Activated CD4-positive, alpha-beta T cell treated with anti-CD3 and anti-CD28 coated beads for 36 hours (primary cell): ENCODE measurements at regions of chr1 and their contacts with region 1.

Region 1: DNA sequence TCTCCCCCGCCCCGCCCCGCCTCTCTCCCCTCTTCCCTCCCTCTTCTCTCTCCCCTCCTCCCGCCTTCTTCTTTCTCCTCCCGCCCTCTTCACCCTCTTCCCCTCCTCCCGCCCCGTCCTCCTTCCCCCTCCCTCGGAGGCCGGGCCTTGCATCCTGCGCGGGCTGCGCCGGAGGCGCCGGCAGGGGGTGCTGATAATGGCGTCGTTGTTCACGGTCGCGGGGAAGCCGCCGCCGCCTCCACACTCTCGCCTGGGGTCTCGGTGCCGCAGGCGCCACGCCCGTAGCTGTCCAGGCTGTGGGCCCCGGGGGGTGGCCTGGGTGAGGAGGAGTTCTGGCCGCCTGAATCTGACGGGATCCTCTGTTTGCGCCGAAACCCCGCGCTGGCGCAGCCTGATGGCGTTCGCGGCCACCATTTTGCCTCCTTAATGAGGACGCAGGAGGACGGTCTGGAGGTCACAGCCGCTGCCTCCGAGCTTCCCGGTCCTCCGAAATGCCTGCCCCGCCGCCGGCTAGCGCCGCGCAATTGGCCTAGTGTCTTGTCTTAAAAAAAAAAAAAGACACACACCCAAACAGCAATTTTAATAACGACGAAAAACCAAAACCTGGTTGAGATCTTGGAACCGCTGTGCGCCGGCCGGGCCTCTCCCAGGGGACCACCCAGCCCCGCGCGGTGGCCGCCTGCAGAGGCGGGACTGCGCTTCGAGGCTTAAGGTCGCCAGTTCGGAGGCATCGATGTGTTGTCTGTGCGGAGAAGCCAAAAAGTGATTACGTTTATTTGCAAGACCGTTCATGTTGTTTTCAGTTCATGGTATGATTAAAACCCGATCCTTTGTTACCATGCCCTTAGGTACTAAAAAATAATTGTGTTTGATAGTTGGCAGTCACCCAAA is 106.6 kb upstream of the HNRNPU start:
- DNase-seq: peak; percentile 96
- ATAC-seq: peak; percentile 84
- H3K4me3 Mint-ChIP-seq: peak overlapping the region; percentile 92
- H3K27ac Mint-ChIP-seq: peak overlapping the region; percentile 97
- H3K4me1 Mint-ChIP-seq: peaks cover 15% of the 10 kb centered on the region
- H3K27me3 Mint-ChIP-seq: no peaks in the 10 kb centered on the region

Region 2: GRCh38 chr1:243850452-243851256 is 1120.3 kb before region 1 on chr1:
- CTCF ChIA-PET with region 1: no interaction called
- POLR2A ChIA-PET with region 1: no interaction called
- intact Hi-C with region 1: loop called in 1 of 2 experiments (anchors 2 kb)
- DNase-seq: peak; percentile 92
- ATAC-seq: peak; percentile 50
- H3K4me3 Mint-ChIP-seq: peak overlapping the region; percentile 70
- H3K27ac Mint-ChIP-seq: peak overlapping the region; percentile 92
- H3K4me1 Mint-ChIP-seq: peaks cover 33% of the 10 kb centered on the region
- H3K27me3 Mint-ChIP-seq: peaks cover 2% of the 10 kb centered on the region

Region 3: GRCh38 chr1:244461245-244462071 is 509.4 kb before region 1 on chr1 and contains the start of gene CATSPERE:
- CTCF ChIA-PET with region 1: no interaction called
- POLR2A ChIA-PET with region 1: no interaction called
- intact Hi-C with region 1: loop called in 1 of 2 experiments (anchors 2 kb)
- DNase-seq: peak; percentile 83
- ATAC-seq: peak; percentile 98
- H3K4me3 Mint-ChIP-seq: peak within 1 kb of the TSS; percentile 69
- H3K27ac Mint-ChIP-seq: peak within 1 kb of the TSS; percentile 99
- H3K4me1 Mint-ChIP-seq: peaks cover 14% of the 10 kb centered on the region
- H3K27me3 Mint-ChIP-seq: no peaks in the 10 kb centered on the region
- total RNA-seq, gene CATSPERE: 0.11 TPM in 1 of 2 experiments, not detected in the other

Region 4: GRCh38 chr1:244552340-244552739 is 418.6 kb before region 1 on chr1:
- CTCF ChIA-PET with region 1: no interaction called
- POLR2A ChIA-PET with region 1: no interaction called
- intact Hi-C with region 1: no loop called
- DNase-seq: no peak
- ATAC-seq: no peak
- H3K4me3 Mint-ChIP-seq: no peak overlapping the region
- H3K27ac Mint-ChIP-seq: no peak overlapping the region
- H3K4me1 Mint-ChIP-seq: no peaks in the 10 kb centered on the region
- H3K27me3 Mint-ChIP-seq: no peaks in the 10 kb centered on the region

Region 5: DNA sequence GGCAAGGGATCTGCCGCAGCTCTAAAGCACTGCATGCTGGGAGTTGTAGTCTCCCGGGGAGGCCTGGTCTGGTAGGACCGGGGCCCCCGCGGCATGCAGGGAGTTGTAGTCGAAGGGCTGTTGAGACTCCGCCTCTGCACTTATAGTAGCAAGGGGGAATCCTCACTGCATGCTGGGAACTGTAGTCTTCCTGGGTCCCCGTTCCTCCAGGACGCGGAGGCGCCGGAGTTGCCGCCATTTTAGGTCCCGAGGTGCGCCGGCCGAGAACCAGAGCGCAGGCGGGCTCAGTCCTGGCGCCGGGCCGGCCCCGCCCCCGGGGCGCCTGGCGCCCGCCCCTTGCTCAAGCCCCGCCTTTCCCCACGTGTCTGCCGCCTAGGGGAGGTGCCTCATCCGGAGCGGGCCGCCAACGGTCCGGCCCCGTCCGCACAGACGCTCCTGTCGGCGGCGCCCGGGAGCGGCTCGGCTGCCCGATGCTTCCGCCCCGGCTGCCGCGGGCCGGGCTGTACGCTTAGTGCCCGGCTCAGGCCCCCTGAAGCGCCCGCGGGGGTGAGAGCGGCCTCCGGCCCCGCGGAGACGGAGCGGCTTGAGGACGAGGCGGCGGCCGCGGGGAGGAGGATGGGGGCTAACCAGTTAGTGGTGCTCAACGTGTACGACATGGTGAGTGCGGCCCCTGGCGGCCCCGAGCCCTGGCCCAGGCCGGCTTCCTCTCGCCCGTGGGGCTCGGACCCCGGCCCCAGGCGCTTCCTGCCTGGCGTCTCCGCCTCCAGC is 318.0 kb before region 1 on chr1 and contains the start of gene DESI2:
- CTCF ChIA-PET with region 1: no interaction called
- POLR2A ChIA-PET with region 1: interaction called, 3 read pairs
- intact Hi-C with region 1: loop called (anchors 1 to 2 kb)
- DNase-seq: peak; percentile 98
- ATAC-seq: peak; percentile 96
- H3K4me3 Mint-ChIP-seq: peak within 1 kb of the TSS; percentile 76
- H3K27ac Mint-ChIP-seq: peak within 1 kb of the TSS; percentile 95
- H3K4me1 Mint-ChIP-seq: peaks cover 19% of the 10 kb centered on the region
- H3K27me3 Mint-ChIP-seq: no peaks in the 10 kb centered on the region
- total RNA-seq, gene DESI2: 24.5 to 26.0 TPM

Region 6: DNA sequence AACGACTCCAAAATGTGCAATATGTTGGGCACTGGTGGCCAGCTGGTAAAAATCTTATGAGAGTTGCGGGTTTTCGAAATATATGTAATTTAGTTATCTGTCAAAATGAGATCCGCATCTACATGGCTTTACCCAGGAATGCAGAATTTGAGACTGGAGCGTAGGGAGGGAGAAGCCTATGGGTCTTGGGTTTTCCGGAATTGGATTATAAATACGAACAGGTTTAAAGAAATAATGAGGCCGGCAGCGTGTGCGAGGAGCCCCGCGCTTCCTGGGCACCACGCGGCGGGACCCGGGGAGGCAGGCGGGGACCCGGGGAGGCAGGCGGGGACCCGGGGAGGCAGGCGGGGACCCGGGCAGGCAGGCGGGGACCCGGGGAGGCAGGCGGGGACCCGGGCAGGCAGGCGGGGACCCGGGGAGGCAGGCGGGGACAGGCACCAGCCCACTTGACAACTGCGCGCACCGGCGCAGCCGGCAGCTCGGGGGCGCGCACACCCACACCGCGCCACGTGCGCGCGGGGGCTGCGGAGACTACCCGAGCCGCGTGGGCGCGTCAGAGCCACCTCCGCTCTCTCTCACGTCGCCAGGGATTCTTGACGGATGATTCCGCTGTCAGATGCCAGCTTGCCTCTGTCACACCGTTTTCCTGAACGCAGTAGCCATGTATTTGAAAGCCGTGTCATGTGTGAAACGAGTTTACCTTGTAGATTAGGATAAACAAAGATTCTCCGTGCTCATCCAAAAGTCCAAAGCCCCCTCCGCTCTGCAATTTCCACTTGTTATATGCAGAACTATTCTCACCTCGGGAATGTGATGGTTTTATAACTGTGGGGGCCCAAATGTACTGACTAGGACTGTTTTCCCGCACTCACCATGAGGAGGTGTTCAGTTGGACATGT is 52.2 kb before region 1 on chr1:
- CTCF ChIA-PET with region 1: interaction called, 3 read pairs
- POLR2A ChIA-PET with region 1: interaction called, 3 read pairs
- intact Hi-C with region 1: loop called (anchors 1 to 2 kb)
- DNase-seq: peak; percentile 66
- ATAC-seq: peak; percentile 86
- H3K4me3 Mint-ChIP-seq: peak overlapping the region; percentile 73
- H3K27ac Mint-ChIP-seq: peak overlapping the region; percentile 80
- H3K4me1 Mint-ChIP-seq: peaks cover 16% of the 10 kb centered on the region
- H3K27me3 Mint-ChIP-seq: peaks cover 3% of the 10 kb centered on the region

Region 7: DNA sequence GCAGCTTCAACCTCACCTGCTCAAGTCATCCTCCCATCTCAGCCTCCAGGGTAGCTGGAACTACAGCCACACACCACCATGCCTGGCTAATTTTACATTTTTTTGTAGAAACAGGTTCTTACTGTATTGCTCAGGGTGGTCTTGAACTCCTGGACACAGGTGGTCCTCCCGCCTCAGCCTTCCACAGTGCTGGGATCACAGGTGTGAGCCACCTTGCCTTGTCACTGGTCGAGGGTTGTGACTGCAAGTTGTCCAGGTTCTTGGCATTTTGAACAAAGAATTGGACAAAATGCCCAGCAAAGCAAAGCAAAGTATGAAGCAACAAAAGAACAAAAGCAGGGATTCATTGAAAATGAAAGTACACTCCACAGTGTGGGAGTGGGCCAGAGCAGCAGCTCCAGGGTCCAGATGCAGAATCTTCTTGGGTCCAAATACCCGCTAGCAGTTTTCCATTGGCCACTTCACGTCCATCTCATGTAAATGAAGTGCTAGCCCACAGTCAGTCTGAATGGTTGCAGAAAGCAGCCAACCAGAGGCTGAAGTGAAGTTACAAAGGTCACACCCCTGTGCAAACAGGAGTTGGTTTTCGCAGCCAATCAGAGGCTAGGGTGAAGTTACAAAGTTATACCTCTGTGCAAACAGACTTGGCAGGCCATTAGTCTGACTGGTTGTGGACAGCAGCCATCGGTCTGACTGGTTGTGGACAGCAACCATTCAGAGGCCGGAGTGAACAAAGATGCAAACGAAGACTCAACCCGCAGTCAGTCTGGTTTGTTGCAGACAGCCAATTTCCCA is 74.4 kb after region 1 on chr1:
- CTCF ChIA-PET with region 1: interaction called, 13 read pairs
- POLR2A ChIA-PET with region 1: interaction called, 5 read pairs
- intact Hi-C with region 1: loop called (anchors 2 kb)
- DNase-seq: no peak
- ATAC-seq: no peak
- H3K4me3 Mint-ChIP-seq: no peak overlapping the region
- H3K27ac Mint-ChIP-seq: no peak overlapping the region
- H3K4me1 Mint-ChIP-seq: no peaks in the 10 kb centered on the region
- H3K27me3 Mint-ChIP-seq: no peaks in the 10 kb centered on the region

Region 8: DNA sequence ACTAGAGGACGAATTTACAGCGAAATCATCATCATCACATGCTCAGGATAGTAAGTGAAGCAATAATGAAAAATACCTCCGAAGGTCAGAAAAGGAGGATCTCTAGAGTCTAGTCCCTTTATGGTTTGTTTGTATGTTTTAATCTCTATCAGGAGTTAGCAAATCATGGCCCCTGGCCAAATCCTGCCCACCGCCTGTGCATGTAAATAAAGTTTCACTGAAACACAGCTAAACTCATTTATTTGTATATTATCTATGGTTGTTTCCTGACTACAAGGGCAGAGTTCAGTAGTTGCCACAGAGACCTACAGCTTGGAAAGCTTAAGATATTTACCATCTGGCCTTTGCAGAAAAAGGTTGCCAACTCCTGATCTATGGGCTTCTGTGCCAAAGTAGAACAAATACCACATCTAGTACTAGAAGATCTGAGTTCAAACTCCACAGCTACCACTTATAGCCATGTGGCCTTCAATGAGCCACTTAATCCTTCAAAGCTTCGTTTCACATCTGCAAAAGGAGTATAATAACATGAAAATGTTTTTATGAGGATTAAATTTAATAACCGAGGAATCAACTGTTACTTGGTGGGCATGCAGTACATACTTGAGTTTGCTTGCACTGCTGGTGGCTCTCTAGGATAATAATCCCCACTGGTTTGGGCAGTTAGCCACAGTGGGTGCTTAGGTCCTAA is 89.9 kb after region 1 on chr1:
- CTCF ChIA-PET with region 1: no interaction called
- POLR2A ChIA-PET with region 1: no interaction called
- intact Hi-C with region 1: no loop called
- DNase-seq: no peak
- ATAC-seq: no peak
- H3K4me3 Mint-ChIP-seq: no peak overlapping the region
- H3K27ac Mint-ChIP-seq: no peak overlapping the region
- H3K4me1 Mint-ChIP-seq: no peaks in the 10 kb centered on the region
- H3K27me3 Mint-ChIP-seq: no peaks in the 10 kb centered on the region

Region 9: DNA sequence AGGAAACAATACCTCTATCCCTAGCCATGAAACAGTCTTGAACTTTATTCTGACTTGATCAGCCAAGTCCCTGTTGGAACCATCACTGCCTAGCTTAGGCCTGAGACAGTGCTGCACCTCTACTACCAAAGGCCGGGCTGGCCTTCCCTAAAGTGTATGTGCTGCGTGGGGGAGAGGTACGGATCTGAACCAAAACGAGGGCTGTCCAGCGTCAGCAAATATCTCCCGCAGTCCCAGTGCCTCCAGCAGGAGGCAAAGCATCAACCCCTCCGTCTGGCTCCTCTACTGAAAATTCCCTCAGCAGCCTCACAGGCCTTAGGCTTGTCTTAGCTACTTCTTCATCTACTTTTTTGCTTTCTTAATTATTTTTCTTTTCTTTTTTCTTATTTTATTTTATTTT is 150.6 kb after region 1 on chr1:
- CTCF ChIA-PET with region 1: no interaction called
- POLR2A ChIA-PET with region 1: no interaction called
- intact Hi-C with region 1: no loop called
- DNase-seq: no peak
- ATAC-seq: no peak
- H3K4me3 Mint-ChIP-seq: no peak overlapping the region
- H3K27ac Mint-ChIP-seq: no peak overlapping the region
- H3K4me1 Mint-ChIP-seq: no peaks in the 10 kb centered on the region
- H3K27me3 Mint-ChIP-seq: no peaks in the 10 kb centered on the region